Transverse colon (tissue), 4 donors: ENCODE measurements at regions of chr9 and their contacts with region 1.

Region 1: GRCh38 chr9:89549031-89549644 is 51.2 kb upstream of the SEMA4D start:
- DNase-seq: peak; percentile 89
- H3K4me3 ChIP-seq: no peak overlapping the region
- H3K27ac ChIP-seq: no peak overlapping the region
- H3K4me1 ChIP-seq: peaks cover 0 to 7% (median 0%) of the 10 kb centered on the region in 4 donors
- H3K27me3 ChIP-seq: no peaks in the 10 kb centered on the region
- CTCF ChIP-seq: peak; percentile 89 to 96 (median 90)
- EP300 ChIP-seq: no peak
- POLR2A ChIP-seq: no peak

Region 2: DNA sequence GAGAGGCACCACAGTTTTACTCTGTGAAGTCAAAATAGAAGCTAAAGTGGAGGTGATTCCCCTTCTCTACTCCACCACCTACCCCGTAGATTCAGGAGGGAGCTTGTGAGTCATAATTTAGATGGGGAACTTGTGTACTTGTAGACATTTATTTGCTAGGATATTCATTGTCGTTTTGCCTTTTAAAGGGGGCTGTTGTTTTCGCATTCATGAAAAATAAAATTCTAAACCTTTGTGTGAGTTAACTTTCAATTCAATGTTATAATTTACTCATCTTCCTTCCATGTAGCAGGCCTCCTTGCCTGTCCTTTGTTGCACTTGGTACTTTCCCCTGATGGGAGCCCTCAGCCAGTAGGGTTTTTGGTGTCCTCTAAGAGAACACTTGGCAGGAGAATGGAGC is 208.8 kb before region 1 on chr9:
- in situ Hi-C with region 1: loop called in 2 of 4 experiments (anchors 10 to 25 kb)
- intact Hi-C with region 1: no loop called
- DNase-seq: no peak
- H3K4me3 ChIP-seq: no peak overlapping the region
- H3K27ac ChIP-seq: no peak overlapping the region
- H3K4me1 ChIP-seq: no peaks in the 10 kb centered on the region
- H3K27me3 ChIP-seq: no peaks in the 10 kb centered on the region
- CTCF ChIP-seq: no peak
- EP300 ChIP-seq: no peak
- POLR2A ChIP-seq: no peak

Region 3: DNA sequence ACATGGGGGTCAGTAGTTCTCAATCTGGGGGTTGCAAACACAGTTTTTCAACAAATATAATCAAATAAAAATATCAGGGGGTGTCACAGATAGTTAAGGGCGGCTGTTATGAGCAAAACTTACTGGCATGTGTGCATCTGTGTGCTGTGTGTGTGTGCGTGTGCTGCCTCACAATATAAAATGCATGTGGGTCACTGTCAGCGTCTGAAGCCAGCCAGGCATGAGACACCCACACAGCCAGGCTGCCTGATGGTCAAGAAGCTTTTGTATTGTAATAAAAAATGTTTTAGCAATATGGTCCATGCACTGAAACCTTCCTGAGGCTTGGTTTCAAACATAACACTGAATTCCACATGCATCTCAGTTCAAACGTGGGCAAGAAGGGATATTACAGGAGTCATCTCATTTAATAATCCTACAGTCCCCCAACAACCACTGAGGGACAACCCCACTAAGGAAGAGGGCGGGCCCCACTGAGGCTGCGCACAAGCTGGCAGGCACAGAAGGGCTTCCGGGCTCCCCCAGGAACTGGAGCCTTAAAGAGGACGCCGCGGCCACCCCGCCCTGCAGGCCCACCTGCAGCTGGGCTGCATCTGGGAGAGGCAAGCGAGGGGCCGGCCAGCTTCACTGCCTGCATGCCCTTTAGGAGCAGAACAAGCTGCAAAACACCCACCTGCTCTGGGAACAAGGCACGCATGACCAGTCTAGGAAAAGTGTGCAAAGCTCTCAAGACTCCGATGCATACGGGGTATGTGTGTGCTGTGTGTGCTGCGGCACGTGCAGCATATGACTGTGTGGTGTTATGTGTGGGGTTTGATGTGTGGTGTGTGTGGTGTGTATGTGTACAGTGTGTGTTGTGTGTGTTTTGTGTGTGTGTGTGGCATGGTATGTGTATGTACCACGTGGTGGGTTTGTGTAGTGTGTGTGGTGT is 65.3 kb before region 1 on chr9:
- in situ Hi-C with region 1: no loop called
- intact Hi-C with region 1: no loop called
- DNase-seq: peak; percentile 66
- H3K4me3 ChIP-seq: no peak overlapping the region
- H3K27ac ChIP-seq: peak overlapping the region in 2 of 4 donors; percentile 8 to 17
- H3K4me1 ChIP-seq: no peaks in the 10 kb centered on the region
- H3K27me3 ChIP-seq: no peaks in the 10 kb centered on the region
- CTCF ChIP-seq: no peak
- EP300 ChIP-seq: no peak
- POLR2A ChIP-seq: no peak